ENCODE measurements at regions of chr1 and their contacts with region 1.

Region 1: DNA sequence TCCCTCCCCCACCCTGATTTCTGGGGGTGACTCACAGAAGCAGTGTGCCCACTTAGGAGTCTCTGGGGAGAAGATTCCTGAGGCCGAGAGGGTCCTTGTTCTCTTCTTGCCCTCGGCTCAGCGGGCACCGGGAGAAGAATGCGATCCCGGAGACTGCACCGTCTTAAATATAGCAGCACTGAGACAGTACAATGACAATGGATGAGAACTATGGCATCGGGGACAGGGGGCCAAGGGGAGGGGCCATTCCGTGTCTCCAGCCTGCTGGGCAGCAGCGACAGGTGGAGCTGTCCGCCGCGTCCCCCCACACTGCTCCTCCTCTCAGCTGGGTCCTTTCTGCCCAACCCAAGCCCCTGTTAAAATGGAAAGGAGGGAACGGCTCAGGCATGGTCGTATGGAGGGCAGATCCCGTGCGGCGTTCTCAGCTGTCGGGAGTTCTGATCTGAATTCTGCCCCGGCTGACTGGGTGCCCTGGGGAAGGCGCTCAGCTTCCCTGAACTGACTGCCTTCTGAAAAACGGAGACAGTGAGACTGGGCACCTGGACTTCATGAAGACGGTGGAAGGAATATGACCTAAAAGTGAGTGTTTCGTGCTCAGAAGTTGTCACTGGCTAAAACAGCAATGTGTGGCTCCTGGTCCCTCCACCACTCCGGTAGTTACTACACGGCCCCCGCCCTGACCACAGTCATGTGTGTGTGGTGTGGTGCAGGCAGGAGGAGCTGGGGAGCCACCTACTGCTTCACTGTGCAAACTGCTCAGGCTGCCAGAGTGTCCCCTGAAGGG is at the start of gene MYOM3:
- DNase-seq: peak; percentile 62
- ATAC-seq: peak; percentile 82
- H3K4me3 ChIP-seq: peak within 1 kb of the TSS; percentile 14 to 59 (median 52); a peak in 5 of 6 replicates
- H3K27ac ChIP-seq: no peak within 1 kb of the TSS
- H3K4me1 ChIP-seq: peaks cover 99% of the 10 kb centered on the region
- H3K27me3 ChIP-seq: peaks cover 0 to 1% of the 10 kb centered on the region in 2 experiments; a peak in 1 of 5 replicates
- CTCF ChIP-seq: peak; percentile 92
- EP300 ChIP-seq: no peak
- POLR2A ChIP-seq: no peak
- RAD21 ChIP-seq: peak; percentile 80
- total RNA-seq, gene MYOM3: 15.3 and 16.5 TPM in 2 replicates

Region 2: DNA sequence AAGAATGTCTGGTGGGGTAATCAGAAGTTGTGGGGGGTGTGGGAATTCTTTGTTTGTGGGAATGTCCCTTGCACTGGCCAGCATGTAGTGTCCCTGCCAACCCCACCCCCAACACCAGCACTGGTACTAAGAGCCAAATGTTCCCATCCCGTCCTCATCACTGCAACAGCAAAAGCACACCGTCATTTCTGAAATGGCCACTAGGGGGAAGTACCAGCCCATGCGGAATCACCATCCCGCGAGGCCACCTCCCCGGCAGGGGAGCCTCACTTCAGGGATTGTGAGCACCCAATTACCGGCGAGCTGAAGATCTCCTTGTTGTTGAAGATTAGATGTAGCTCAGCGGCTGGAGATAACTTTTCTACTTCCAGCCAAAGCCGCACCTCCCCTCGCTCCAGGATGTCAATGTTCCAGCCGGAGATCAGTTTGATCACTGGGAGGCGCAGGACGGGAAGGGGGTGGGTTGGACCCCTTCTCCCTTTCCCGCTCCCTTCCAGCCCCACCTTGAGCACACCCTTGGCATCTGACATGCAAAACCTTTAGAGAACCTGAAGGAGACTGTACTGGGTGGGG is 41.3 kb before region 1 on chr1:
- CTCF ChIA-PET with region 1: interaction called, 13 read pairs
- POLR2A ChIA-PET with region 1: no interaction called
- in situ Hi-C with region 1: loop called (anchors 5 kb)
- intact Hi-C with region 1: loop called (anchors 1 kb)
- DNase-seq: peak; percentile 68
- ATAC-seq: peak; percentile 94
- H3K4me3 ChIP-seq: no peak overlapping the region
- H3K27ac ChIP-seq: no peak overlapping the region
- H3K4me1 ChIP-seq: no peaks in the 10 kb centered on the region
- H3K27me3 ChIP-seq: no peaks in the 10 kb centered on the region
- CTCF ChIP-seq: peak; percentile 96
- EP300 ChIP-seq: no peak
- POLR2A ChIP-seq: no peak
- RAD21 ChIP-seq: peak; percentile 86

Region 3: GRCh38 chr1:24142546-24143534 is 30.7 kb after region 1 on chr1 and contains the start of gene IL22RA1:
- CTCF ChIA-PET with region 1: no interaction called
- POLR2A ChIA-PET with region 1: interaction called, 10 read pairs
- in situ Hi-C with region 1: no loop called
- intact Hi-C with region 1: no loop called
- DNase-seq: peak; percentile 48
- ATAC-seq: peak; percentile 86
- H3K4me3 ChIP-seq: peak within 1 kb of the TSS; percentile 62 to 82 (median 68)
- H3K27ac ChIP-seq: peak within 1 kb of the TSS; percentile 34
- H3K4me1 ChIP-seq: peaks cover 45% of the 10 kb centered on the region
- H3K27me3 ChIP-seq: no peaks in the 10 kb centered on the region; a peak in 1 of 5 replicates
- CTCF ChIP-seq: no peak
- EP300 ChIP-seq: no peak
- POLR2A ChIP-seq: peak; percentile 48 to 82; a peak in 3 of 4 replicates
- RAD21 ChIP-seq: no peak
- total RNA-seq, gene IL22RA1: 2.1 and 4.4 TPM in 2 replicates

Region 4: DNA sequence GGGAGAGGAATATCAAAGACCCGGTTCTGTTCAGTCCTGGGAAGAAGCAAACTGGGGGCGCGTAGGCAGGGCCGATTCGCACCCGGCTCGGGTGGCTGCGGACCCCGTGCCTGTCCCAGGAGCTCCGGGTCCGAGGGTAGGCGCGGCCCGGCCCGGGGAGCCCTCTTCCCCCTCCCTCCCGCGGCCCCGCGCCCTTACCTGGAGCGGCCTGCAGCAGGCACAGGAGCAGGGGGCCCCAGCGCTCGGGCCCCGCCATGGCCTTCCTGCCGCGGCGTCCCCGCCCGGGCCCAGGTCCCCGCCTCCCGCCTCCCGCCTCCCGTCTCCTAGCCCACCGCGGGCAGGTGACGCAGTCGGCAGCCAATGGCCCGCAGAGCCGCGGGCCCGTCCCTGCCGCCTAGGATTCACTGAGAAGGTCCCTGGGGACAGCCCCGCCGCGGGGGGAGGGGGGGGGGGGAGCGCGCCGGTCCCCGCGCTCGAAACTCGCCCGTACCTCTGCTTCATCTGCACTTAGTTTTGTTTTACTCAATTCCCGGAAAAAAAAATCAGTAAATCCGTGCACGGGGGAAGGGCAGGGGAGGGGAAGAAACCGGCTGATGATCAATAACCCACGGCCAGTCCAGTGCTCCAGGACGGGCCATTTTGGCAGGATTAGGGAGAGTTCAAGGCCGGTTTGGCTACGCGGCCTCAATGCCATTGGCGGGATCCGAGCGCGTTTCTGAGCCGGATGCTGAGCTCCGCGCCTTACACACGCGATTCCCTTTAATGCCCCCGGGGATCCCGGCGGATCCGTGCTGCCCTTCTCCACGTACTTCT is 75.0 kb after region 1 on chr1 and contains the start of gene IFNLR1:
- CTCF ChIA-PET with region 1: no interaction called
- POLR2A ChIA-PET with region 1: interaction called, 3 read pairs
- in situ Hi-C with region 1: no loop called
- intact Hi-C with region 1: loop called (anchors 5 kb)
- DNase-seq: peak; percentile 62
- ATAC-seq: peak; percentile 86
- H3K4me3 ChIP-seq: peak within 1 kb of the TSS; percentile 68 to 82 (median 78)
- H3K27ac ChIP-seq: peak within 1 kb of the TSS; percentile 78
- H3K4me1 ChIP-seq: peaks cover 86% of the 10 kb centered on the region
- H3K27me3 ChIP-seq: no peaks in the 10 kb centered on the region
- CTCF ChIP-seq: no peak
- EP300 ChIP-seq: no peak
- POLR2A ChIP-seq: peak; percentile 13 to 72; a peak in 2 of 4 replicates
- RAD21 ChIP-seq: no peak
- total RNA-seq, gene IFNLR1: 5.7 and 8.5 TPM in 2 replicates